ENCODE measurements at regions of chr12 and their contacts with region 1.

Region 1: DNA sequence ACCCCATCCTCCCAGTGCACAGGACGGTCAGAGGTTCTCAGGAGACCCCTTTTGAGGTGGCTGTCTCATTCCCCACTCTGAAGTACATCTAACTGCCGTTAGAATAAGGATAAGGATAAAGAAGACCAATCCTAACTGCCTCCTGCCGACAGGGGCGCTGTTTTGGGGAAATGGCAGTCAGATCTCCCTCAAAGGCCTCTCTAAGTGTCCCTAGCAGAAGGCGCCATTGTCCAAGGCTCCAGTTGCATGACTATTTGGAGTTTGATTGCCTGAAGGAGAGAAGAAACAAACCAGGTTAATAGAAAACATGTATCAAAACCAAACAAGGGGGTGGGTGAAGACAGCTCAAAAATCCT is 29.1 kb upstream of the KLRB1 start:
- DNase-seq: no peak
- H3K4me3 ChIP-seq: no peak overlapping the region
- H3K27ac ChIP-seq: no peak overlapping the region
- H3K4me1 ChIP-seq: peaks cover 0 to 13% (median 6%) of the 10 kb centered on the region in 3 donors
- H3K27me3 ChIP-seq: no peaks in the 10 kb centered on the region
- CTCF ChIP-seq: no peak
- POLR2A ChIP-seq: no peak

Region 2: DNA sequence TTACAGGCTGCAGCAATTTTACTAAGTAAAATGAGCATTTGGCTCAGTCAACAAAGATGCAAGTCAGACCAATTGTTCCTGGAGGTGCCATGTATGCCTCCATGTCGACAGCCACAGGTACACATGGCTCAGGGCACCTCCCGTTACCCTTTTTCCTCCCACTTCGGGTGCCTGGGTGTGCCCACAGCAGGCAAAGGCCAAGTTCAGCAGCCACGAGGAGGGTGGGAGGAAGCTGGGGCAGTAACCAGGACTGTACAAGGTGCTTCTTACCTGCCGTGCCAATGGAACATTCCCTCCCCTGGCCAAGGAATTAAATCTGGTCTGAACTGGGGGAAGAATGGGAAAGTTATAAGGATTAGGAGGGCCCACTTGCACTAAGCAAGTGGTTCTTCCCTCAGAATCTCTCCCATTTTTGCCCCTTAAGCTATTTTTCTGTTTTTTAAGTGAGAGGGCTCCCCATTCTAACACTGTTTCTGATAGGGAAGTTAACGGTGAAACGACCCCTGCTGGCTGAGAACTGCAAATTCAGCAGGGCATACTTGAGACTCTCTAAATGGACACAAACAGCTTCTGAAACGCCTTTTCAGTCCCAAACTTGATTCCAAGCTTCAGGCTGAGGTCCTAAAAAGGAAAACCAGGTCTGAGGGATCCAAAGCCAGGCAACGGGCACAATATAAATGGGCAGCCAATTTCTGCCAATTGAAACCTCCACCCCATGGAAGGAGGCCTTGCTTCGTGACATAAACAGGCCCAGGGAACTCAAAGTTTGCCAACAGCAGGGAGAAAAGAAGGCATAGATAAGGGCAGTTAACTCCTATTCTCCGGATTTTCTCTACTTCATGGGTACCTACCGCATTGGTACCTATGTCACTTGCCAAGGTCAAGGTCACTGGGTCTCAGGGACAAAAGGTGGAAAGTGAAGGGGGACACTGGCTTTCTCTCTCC is 71.3 kb after region 1 on chr12:
- intact Hi-C with region 1: loop called (anchors 5 kb)
- DNase-seq: no peak
- H3K4me3 ChIP-seq: no peak overlapping the region
- H3K27ac ChIP-seq: peak overlapping the region in 2 of 4 donors; percentile 15 to 33
- H3K4me1 ChIP-seq: peaks cover 0 to 12% (median 0%) of the 10 kb centered on the region in 3 donors
- H3K27me3 ChIP-seq: no peaks in the 10 kb centered on the region
- CTCF ChIP-seq: peak; percentile 74 to 85 (median 80)
- POLR2A ChIP-seq: no peak

Region 3: DNA sequence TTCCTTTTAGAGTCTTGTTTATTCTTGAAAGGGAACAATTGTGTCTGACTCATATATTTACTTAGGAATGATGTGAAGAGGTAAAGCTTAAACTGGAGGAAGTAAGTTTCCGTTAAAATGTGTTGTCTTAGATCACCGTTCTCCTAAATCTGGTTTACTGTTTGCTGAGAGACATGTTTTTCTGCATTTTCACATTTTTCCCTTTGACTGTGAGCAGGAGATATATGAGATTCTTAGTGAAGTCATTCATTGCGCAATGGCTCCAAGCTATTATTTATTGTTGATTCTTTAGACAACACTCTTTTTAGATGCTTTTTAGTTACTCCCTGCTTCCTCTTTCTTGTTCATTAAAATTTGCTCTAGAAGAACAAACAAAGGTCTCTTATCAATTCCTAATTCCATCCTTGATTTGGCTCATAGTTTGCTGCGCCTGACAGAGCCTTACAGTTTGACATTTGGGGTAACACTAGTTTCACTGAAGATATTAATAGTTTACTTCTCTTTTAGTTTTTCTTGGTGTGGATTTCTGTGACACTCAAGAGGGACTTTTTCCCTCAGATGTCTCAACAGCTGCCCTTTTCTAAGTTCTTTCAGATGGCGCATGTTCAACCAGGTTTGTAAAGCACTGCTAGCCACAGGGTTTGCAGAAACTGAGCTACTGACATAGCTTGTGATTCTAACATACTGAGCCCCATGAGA is 84.7 kb after region 1 on chr12:
- intact Hi-C with region 1: no loop called
- DNase-seq: no peak
- H3K4me3 ChIP-seq: no peak overlapping the region
- H3K27ac ChIP-seq: peak overlapping the region in 1 of 4 donors; percentile 9
- H3K4me1 ChIP-seq: peaks cover 0 to 21% (median 0%) of the 10 kb centered on the region in 3 donors
- H3K27me3 ChIP-seq: no peaks in the 10 kb centered on the region
- CTCF ChIP-seq: no peak
- POLR2A ChIP-seq: no peak